Psoas muscle (tissue), 8 donors: ENCODE measurements at regions of chr3 and their contacts with region 1.

Region 1: DNA sequence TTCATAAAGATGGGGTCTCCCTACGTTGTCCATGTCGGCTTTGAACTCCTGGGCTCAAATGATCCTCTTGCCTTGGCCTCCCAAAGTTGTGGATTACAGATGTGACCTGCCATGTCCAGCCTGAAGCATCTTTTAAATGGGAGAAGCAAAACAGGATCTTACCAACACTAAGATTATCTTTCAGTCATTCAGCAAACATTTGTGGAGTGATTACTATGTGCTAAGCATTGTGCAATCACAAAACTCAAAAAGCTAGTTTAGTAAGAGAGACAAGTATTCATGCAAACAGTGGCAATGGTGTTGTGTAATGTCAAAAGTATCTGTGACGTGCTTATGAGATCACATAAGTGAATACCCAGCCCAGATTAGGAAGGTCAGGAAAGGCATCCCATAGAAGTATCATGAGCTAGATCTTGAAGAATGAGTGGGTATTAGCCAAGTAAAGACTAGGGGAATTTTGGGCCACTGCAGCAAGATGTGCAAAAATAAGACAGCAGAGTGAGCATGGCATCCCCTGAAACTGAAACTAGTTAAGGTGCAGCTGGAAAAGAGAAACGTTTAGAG is 32.0 kb downstream of the SEC62 start:
- DNase-seq: no peak
- ATAC-seq: peak; percentile 32 to 69 (median 66)
- H3K4me3 ChIP-seq: no peak overlapping the region
- H3K27ac ChIP-seq: no peak overlapping the region
- H3K4me1 ChIP-seq: peaks cover 2% of the 10 kb centered on the region
- H3K27me3 ChIP-seq: no peaks in the 10 kb centered on the region
- CTCF ChIP-seq: no peak

Region 2: GRCh38 chr3:169780742-169781141 is 217.9 kb before region 1 on chr3:
- intact Hi-C with region 1: loop called in 1 of 2 experiments (anchors 10 kb)
- DNase-seq: no peak
- ATAC-seq: no peak
- H3K4me3 ChIP-seq: no peak overlapping the region
- H3K27ac ChIP-seq: no peak overlapping the region
- H3K4me1 ChIP-seq: peaks cover 13% of the 10 kb centered on the region
- H3K27me3 ChIP-seq: no peaks in the 10 kb centered on the region
- CTCF ChIP-seq: no peak

Region 3: GRCh38 chr3:169836078-169836941 is 162.3 kb before region 1 on chr3:
- intact Hi-C with region 1: no loop called
- DNase-seq: no peak
- ATAC-seq: no peak
- H3K4me3 ChIP-seq: no peak overlapping the region
- H3K27ac ChIP-seq: no peak overlapping the region
- H3K4me1 ChIP-seq: no peaks in the 10 kb centered on the region
- H3K27me3 ChIP-seq: peaks cover 0 to 2% (median 0%) of the 10 kb centered on the region in 3 donors
- CTCF ChIP-seq: no peak